ENCODE measurements at regions of chr5 and their contacts with region 1.

Region 1: GRCh38 chr5:127492854-127493738 is 24.3 kb upstream of the PRRC1 start:
- DNase-seq: no peak
- H3K4me3 ChIP-seq: no peak overlapping the region
- H3K27ac ChIP-seq: no peak overlapping the region
- H3K27me3 ChIP-seq: peaks cover 4% of the 10 kb centered on the region
- CTCF ChIP-seq: peak; percentile 88

Region 2: DNA sequence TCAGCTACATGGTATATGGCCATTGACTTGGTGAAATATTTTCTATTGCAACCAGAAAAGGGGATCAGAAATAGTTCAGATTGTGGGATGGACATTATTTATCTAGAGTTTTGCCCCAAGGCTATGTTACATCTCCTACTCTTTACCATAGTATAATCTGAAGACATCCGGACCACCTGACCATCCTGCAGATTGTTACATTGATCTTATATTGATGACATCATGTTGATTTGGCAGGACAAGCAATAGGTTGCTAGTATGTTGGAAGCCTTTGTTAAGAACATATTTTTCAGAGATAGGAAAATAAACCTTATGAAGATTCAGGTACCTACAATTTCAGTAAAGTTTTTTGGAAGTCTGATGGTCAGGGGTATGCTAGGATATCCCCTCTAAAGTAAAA is 375.4 kb before region 1 on chr5:
- CTCF ChIA-PET with region 1: no interaction called
- POLR2A ChIA-PET with region 1: no interaction called
- DNase-seq: no peak
- H3K4me3 ChIP-seq: no peak overlapping the region
- H3K27ac ChIP-seq: no peak overlapping the region
- H3K27me3 ChIP-seq: peaks cover 2% of the 10 kb centered on the region
- CTCF ChIP-seq: no peak

Region 3: DNA sequence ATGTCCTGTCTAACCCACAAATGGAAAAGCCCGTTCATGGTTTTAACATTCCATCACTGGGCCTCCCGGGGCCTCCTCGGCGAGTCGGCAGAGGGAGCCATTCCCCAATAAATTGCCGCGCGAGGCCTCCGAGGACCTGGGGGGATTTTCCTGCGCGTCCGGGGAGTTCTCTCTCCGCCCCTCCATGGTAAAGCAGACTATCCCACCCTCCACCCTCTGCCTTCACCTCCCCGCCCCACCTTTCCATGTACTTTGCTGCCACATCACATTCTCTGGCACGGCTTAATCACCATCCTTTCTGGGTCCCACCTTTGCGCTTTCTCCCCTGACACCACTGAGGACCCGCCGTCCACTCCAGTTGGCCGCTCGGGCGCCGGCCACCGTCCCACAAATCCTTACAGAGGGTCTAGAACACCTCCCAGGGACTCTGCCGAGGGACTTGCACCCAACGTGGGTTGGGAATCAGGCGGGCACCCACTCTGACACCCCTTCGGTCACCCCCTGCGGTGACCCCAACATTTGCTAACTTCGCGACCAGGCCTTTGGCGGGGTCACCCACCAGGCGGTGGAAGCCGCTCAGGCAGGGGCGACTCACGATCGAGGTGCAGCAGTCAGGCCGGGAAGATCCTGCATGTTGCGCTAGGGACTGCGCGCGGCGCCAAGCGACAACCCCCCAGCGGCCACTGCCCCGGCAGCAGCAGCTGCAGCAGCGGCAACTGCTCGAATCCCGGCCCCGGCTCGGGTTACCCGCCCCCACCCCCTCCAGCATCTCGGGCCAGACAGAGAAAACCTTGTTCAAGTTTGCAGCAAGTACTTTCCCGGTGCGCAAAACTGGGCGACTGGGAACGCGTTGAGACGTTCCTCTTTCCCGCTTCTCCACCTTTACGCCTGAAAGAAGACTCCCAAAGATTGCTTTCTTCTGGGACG is 202.8 kb before region 1 on chr5 and contains the start of gene MEGF10:
- CTCF ChIA-PET with region 1: interaction called, 16 read pairs
- POLR2A ChIA-PET with region 1: no interaction called
- DNase-seq: no peak
- H3K4me3 ChIP-seq: peak within 1 kb of the TSS; percentile 29
- H3K27ac ChIP-seq: no peak within 1 kb of the TSS
- H3K27me3 ChIP-seq: peaks cover 11% of the 10 kb centered on the region
- CTCF ChIP-seq: peak; percentile 79
- polyA plus RNA-seq, gene MEGF10: not detected in 2 replicates

Region 4: GRCh38 chr5:127367946-127368465 is 125.1 kb before region 1 on chr5:
- CTCF ChIA-PET with region 1: no interaction called
- POLR2A ChIA-PET with region 1: no interaction called
- DNase-seq: no peak
- H3K4me3 ChIP-seq: no peak overlapping the region
- H3K27ac ChIP-seq: no peak overlapping the region
- H3K27me3 ChIP-seq: peaks cover 2% of the 10 kb centered on the region
- CTCF ChIP-seq: no peak

Region 5: GRCh38 chr5:127505905-127506304 is 12.8 kb after region 1 on chr5:
- CTCF ChIA-PET with region 1: interaction called, 14 read pairs
- POLR2A ChIA-PET with region 1: no interaction called
- DNase-seq: no peak
- H3K4me3 ChIP-seq: no peak overlapping the region
- H3K27ac ChIP-seq: no peak overlapping the region
- H3K27me3 ChIP-seq: peaks cover 4% of the 10 kb centered on the region
- CTCF ChIP-seq: no peak

Region 6: DNA sequence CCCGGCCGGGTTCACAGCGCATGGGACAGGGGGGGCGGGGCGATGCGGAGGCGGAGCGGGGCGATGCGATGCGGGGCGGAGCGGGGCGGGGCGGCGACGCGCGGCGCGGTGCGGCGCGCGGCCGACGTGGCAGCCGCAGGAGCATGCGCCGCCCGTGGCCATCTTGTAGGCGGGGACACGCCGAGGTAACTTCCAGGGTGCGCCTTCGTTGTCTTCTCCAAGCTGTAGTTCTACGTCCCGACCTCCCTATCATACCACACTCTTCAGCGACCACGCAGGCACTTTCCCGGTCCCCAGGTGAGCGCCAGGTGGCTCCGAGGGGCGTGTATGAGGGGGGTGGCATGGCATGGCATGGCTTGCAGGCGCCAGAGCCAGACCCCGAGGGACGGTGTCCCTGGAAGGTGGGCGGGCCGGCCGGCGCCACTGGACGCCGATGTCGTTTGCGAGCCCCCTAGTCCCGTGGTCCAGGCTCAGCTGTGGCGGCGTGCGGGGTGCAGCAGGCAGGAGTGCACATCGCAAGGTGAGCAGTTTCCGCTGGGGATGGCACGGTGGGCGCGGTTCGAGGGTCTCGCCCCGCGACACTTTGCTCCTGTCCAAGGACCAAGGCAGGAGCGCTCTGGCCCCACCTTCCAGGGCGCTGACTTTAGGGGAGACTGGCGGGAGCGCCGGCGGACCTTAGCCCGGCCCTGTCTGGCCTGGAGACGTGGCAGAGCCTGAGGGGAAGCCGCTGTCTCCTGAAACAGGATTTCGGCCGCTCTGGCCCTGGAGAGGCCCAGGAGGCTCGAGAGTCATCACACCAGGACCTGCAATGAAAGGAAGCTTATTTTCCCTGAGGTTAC is 24.6 kb after region 1 on chr5 and contains the start of gene PRRC1:
- CTCF ChIA-PET with region 1: interaction called, 10 read pairs
- POLR2A ChIA-PET with region 1: no interaction called
- DNase-seq: peak; percentile 38
- H3K4me3 ChIP-seq: peak within 1 kb of the TSS; percentile 96
- H3K27ac ChIP-seq: peak within 1 kb of the TSS; percentile 96
- H3K27me3 ChIP-seq: no peaks in the 10 kb centered on the region
- CTCF ChIP-seq: no peak
- polyA plus RNA-seq, gene PRRC1: 108 and 120 TPM in 2 replicates

Region 7: GRCh38 chr5:127723572-127723971 is 230.5 kb after region 1 on chr5:
- CTCF ChIA-PET with region 1: no interaction called
- POLR2A ChIA-PET with region 1: no interaction called
- DNase-seq: no peak
- H3K4me3 ChIP-seq: no peak overlapping the region
- H3K27ac ChIP-seq: no peak overlapping the region
- H3K27me3 ChIP-seq: no peaks in the 10 kb centered on the region
- CTCF ChIP-seq: no peak